ENCODE measurements at regions of chr12 and their contacts with region 1.

Region 1: DNA sequence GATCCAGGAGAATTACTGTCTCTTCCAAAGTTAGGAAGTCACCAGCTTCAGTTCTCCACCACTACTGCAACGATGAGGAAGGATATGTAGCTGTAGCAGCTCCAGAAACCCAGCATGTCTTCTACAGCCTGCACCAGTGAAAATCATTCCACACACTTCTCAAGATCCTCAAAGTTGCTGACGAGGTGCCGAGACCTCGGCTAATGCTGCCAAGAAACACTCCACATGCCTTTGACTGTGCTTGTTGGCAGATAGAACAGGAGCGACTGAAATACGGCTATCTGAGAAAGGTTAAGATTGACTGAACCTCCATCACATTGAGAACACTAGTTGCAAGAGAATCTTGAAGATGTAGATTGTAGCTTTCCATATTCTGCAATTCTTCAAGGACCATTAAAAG is 241.9 kb downstream of the PPFIA2 start:
- DNase-seq: no peak
- H3K4me3 ChIP-seq: no peak overlapping the region
- H3K4me3 Mint-ChIP-seq: no peak overlapping the region
- H3K27ac Mint-ChIP-seq: no peak overlapping the region
- H3K4me1 ChIP-seq: no peaks in the 10 kb centered on the region
- H3K4me1 Mint-ChIP-seq: no peaks in the 10 kb centered on the region
- H3K27me3 ChIP-seq: no peaks in the 10 kb centered on the region
- H3K27me3 Mint-ChIP-seq: peaks cover 2% of the 10 kb centered on the region
- CTCF ChIP-seq: no peak

Region 2: GRCh38 chr12:80846952-80847351 is 670.3 kb before region 1 on chr12:
- CTCF ChIA-PET with region 1: interaction called, 10 read pairs
- POLR2A ChIA-PET with region 1: no interaction called
- intact Hi-C with region 1: no loop called
- DNase-seq: no peak
- H3K4me3 ChIP-seq: no peak overlapping the region
- H3K4me3 Mint-ChIP-seq: no peak overlapping the region
- H3K27ac Mint-ChIP-seq: no peak overlapping the region
- H3K4me1 ChIP-seq: no peaks in the 10 kb centered on the region
- H3K4me1 Mint-ChIP-seq: peaks cover 10% of the 10 kb centered on the region
- H3K27me3 ChIP-seq: no peaks in the 10 kb centered on the region
- H3K27me3 Mint-ChIP-seq: no peaks in the 10 kb centered on the region
- CTCF ChIP-seq: no peak

Measured in Caco-2 (cell line).